ENCODE measurements at regions of chr14 and their contacts with region 1.

Region 1: DNA sequence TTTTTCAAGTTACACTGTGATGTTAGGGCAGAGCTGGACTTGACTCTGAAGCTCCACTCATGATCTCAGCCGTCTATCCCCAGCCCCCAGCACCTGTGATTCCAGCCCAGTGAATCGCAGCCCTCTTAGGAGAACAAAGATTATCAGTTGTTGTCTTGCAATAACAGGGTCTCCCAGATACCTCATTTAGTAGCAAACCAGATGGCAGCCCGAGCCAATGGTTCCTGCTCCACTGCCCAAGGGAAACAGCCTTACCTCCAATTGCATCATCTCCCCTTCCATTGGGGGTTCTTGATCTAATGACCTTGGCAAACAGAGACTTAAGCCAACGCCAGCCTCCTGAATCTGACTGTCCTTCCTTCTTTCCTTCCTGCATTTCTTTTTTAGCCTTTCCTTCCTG is 371.2 kb downstream of the BCL11B start:
- DNase-seq: no peak
- ATAC-seq: no peak
- H3K4me3 ChIP-seq: no peak overlapping the region
- H3K4me3 Mint-ChIP-seq: no peak overlapping the region
- H3K27ac ChIP-seq: no peak overlapping the region
- H3K27ac Mint-ChIP-seq: no peak overlapping the region
- H3K4me1 ChIP-seq: no peaks in the 10 kb centered on the region
- H3K4me1 Mint-ChIP-seq: no peaks in the 10 kb centered on the region
- H3K27me3 ChIP-seq: no peaks in the 10 kb centered on the region
- H3K27me3 Mint-ChIP-seq: no peaks in the 10 kb centered on the region
- CTCF ChIP-seq: no peak

Region 2: DNA sequence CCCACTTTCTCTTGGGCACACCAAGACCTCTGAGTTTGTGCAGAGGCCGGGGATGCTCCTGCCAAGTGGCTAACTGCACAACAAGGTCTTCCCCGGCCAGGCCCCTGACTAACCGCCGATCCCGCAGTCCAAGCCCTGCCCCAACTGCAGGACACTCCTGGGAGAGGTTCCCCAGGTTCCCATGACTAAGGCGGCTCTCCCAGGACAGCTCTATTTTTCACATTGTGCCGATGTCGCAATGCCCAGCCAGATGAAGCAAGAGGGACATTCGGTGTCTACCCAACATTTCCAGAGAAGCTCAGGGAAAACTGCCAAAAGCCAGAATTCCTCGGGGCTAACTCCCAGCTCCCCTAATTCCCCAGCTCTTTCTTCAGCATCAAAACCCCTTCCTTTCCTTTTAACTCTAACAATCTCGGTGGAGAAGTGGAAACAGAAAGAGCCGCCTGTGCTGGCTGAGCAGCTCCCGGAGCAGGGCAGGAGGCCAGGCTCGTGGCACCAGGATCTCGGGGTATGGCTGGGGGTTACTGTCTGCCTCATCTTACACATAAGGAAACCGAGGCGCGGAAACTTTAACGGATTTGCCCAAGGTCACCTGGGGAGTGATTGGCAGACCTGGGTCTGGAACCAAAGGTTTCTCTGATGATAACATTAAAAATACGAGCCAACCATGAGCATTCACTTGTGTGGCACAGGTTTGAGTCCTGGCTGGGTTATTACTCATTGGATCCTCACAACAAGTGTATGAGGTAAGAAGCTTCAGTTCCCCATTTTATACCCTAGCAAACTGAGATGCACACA is 53.0 kb after region 1 on chr14:
- CTCF ChIA-PET with region 1: no interaction called
- POLR2A ChIA-PET with region 1: no interaction called
- intact Hi-C with region 1: loop called in 1 of 2 experiments (anchors 5 kb)
- DNase-seq: peak in 2 of 14 experiments; percentile 36 to 44
- ATAC-seq: no peak
- H3K4me3 ChIP-seq: no peak overlapping the region
- H3K4me3 Mint-ChIP-seq: no peak overlapping the region
- H3K27ac ChIP-seq: no peak overlapping the region
- H3K27ac Mint-ChIP-seq: no peak overlapping the region
- H3K4me1 ChIP-seq: no peaks in the 10 kb centered on the region
- H3K4me1 Mint-ChIP-seq: no peaks in the 10 kb centered on the region
- H3K27me3 ChIP-seq: no peaks in the 10 kb centered on the region
- H3K27me3 Mint-ChIP-seq: no peaks in the 10 kb centered on the region
- CTCF ChIP-seq: no peak

Measured in CD4-positive, alpha-beta T cell (primary cell).